Heart right ventricle (tissue), 16 donors: ENCODE measurements at regions of chr1 and their contacts with region 1.

Region 1: DNA sequence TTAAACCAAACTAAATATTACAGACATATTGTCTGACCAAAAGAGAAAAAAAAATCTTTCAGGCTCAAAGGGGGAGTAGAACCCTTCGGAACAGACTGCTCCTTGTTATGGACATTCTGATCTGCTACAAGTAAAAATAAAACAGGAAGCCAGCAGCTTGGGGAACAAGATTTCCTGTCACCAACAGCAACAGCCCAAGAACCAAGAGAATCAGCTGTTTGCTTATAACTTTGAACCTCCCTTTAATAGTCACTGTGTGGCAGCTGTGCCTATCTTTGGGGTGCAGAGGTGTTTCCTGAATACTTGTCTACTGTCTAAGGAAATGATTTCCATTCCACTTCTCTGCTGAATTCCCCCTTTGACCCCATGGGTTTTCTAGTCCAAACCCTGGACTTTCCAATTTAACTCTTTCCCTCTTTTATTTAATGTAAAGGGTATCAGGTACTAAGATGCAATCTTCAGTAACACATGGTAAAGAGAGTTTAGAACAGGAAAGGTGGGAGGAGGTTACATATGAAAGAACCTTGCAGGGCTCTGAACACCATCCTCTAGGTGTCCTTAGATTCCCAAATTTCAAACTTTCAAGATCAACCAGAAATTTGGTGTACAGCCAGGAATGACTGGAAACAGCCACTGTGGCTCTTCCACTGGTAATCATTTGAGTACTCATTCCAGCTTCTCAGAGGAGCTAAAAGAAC is 38.6 kb downstream of the GPR3 start:
- DNase-seq: peak in 1 of 2 donors; percentile 50
- ATAC-seq: peak; percentile 13 to 76 (median 38)
- H3K4me3 ChIP-seq: peak overlapping the region in 3 of 10 donors; percentile 8 to 30 (median 19)
- H3K27ac ChIP-seq: peak overlapping the region; percentile 78 to 88 (median 86)
- H3K4me1 ChIP-seq: peaks cover 31 to 100% (median 97%) of the 10 kb centered on the region in 9 donors
- H3K27me3 ChIP-seq: no peaks in the 10 kb centered on the region
- CTCF ChIP-seq: peak in 3 of 9 donors; percentile 37 to 46 (median 43)

Region 2: DNA sequence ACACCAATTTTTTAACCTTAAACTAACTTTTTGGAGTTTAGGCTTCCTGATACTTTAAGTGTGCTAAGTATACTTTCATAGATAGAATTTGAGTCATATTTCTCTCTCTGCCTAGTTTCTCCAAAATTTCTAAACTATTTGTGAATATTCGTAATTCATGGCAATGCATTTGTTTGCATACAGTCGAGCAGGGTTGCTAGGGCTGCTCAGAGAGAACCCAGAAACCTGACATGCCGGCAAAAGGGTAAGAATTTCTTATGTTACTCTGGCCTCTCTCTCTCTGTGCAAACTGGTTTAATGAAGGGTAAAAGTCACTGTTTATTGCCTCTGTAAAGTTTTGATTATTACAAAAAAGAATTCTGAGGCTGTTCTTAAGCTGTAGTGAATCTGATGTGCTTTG is 251.1 kb before region 1 on chr1:
- intact Hi-C with region 1: no loop called
- DNase-seq: no peak
- ATAC-seq: no peak
- H3K4me3 ChIP-seq: no peak overlapping the region
- H3K27ac ChIP-seq: no peak overlapping the region
- H3K4me1 ChIP-seq: no peaks in the 10 kb centered on the region
- H3K27me3 ChIP-seq: no peaks in the 10 kb centered on the region
- CTCF ChIP-seq: no peak

Region 3: GRCh38 chr1:27365372-27366112 is 65.5 kb before region 1 on chr1:
- intact Hi-C with region 1: loop called in 1 of 10 experiments (anchors 2 kb)
- DNase-seq: peak; percentile 90 to 92
- ATAC-seq: peak; percentile 75 to 90 (median 83)
- H3K4me3 ChIP-seq: peak overlapping the region; percentile 45 to 90 (median 77)
- H3K27ac ChIP-seq: peak overlapping the region; percentile 97 to 100 (median 98)
- H3K4me1 ChIP-seq: peaks cover 25 to 66% (median 43%) of the 10 kb centered on the region in 9 donors
- H3K27me3 ChIP-seq: no peaks in the 10 kb centered on the region
- CTCF ChIP-seq: no peak

Region 4: GRCh38 chr1:27481994-27482620 is 51.1 kb after region 1 on chr1:
- intact Hi-C with region 1: loop called in 5 of 10 experiments (anchors 5 kb)
- DNase-seq: no peak
- ATAC-seq: no peak
- H3K4me3 ChIP-seq: no peak overlapping the region
- H3K27ac ChIP-seq: peak overlapping the region in 1 of 10 donors; percentile 21
- H3K4me1 ChIP-seq: peaks cover 10 to 87% (median 61%) of the 10 kb centered on the region in 9 donors
- H3K27me3 ChIP-seq: no peaks in the 10 kb centered on the region
- CTCF ChIP-seq: no peak

Region 5: DNA sequence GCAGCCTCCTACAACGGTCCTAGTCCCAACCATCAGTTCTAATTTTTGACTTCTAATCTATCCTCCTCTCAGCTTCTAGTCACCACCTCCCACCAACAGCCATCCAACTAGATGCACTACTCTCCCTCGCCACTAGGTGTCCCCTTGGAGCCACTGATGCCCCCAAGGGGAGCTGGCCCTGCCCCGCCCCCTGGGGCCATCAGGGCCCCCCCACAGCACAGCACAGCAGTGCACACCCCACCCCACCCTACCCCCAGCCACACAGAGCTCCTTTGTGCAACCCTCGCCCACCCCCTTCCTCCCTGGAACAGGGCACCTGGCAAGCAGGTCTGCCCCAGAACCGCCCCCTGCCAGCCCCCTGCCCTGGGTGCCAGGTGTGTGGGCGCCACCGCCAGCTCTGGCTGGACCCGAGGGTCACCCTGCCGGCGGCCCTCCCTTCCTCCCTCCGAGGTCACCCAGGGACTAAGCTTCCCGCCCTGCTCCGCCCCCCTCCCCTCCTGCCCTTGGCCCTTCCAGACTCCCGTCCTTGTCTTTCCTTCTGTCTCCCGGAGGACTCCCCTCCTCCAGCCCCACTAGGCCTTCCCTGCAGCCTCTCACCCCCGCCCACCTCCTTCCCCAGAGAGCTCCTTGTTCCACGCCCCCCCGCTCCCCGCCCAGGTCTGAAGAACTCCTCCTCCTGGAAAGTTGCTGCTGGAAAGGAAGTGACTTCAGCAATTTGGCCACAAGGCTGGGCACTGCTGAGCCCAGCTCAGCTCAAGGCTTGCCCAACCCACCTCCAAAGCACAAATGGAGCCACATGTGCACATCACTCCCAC is 125.9 kb after region 1 on chr1:
- intact Hi-C with region 1: loop called in 2 of 10 experiments (anchors 2 to 5 kb)
- DNase-seq: peak; percentile 93 to 96
- ATAC-seq: peak; percentile 65 to 78 (median 72)
- H3K4me3 ChIP-seq: peak overlapping the region in 8 of 10 donors; percentile 10 to 32 (median 22)
- H3K27ac ChIP-seq: peak overlapping the region; percentile 74 to 96 (median 86)
- H3K4me1 ChIP-seq: peaks cover 43 to 84% (median 69%) of the 10 kb centered on the region in 9 donors
- H3K27me3 ChIP-seq: no peaks in the 10 kb centered on the region
- CTCF ChIP-seq: peak; percentile 92 to 98 (median 96)